WTC11 (cell line): ENCODE measurements at regions of chr11 and their contacts with region 1.

Region 1: DNA sequence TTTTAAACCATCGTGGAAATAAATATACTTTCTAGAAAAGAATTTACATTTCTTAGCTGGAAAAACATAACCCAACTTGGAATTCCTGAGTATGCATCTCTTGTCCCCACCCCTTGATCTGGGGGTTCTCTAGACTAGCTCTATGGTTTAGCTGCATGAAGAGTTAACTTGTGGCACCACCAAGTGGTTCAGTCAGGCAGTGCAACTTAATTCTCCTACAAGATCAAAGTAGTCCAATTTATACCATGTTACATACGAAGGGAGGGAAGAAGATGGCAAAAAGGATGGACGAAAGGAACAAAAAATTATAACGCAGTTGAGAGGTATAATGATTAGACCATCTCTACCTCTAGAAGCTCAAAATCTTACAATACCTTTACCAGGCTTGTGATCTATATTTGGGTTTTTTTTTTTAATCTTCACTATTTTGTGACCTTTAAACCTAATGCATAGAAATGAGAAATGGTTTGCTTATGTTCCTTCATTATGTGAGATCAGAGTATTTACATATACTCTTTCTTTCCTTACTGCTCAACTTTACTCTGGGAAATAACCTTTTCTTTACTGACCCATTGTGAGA is 28.5 kb upstream of the ALKBH3 start:
- DNase-seq: peak; percentile 77
- ATAC-seq: peak; percentile 97
- H3K4me3 Mint-ChIP-seq: no peak overlapping the region
- H3K27ac Mint-ChIP-seq: no peak overlapping the region
- H3K4me1 Mint-ChIP-seq: no peaks in the 10 kb centered on the region
- H3K27me3 Mint-ChIP-seq: no peaks in the 10 kb centered on the region
- CTCF ChIP-seq: peak; percentile 76

Region 2: DNA sequence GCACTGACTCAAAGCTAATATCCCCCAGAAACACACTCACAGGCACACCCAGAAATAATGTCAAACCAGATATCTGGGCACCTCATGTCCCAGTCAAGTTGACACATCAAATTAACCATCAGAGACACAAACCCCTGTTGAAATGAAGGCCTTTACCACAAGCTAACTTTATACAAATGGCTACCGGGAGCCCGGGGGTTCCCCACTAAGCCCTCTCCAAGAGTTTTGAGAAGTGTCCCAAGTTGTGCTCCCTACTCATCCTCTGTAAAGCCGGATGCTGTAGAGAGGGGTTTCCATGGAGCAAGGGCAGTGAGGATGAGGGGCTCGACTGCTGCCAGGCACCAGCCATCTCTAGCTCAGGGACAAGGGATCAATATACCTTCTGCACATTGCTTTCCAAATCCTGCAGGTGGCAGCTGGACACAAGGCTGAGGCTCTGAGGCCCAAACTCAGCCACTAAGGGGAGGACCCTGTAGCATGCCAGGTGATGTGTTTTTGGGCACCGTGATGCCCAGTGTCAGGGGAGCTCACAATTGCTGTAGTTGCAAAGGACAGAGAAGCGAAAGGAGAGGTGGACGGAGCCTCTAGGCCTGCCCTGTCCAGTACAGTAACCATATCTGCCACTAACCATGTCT is 347.7 kb before region 1 on chr11:
- CTCF ChIA-PET with region 1: interaction called, 20 read pairs
- POLR2A ChIA-PET with region 1: no interaction called
- DNase-seq: peak; percentile 44
- ATAC-seq: peak; percentile 91
- H3K4me3 Mint-ChIP-seq: no peak overlapping the region
- H3K27ac Mint-ChIP-seq: no peak overlapping the region
- H3K4me1 Mint-ChIP-seq: peaks cover 9% of the 10 kb centered on the region
- H3K27me3 Mint-ChIP-seq: peaks cover 10% of the 10 kb centered on the region
- CTCF ChIP-seq: no peak; the same call in 1 of the 2 replicates

Region 3: DNA sequence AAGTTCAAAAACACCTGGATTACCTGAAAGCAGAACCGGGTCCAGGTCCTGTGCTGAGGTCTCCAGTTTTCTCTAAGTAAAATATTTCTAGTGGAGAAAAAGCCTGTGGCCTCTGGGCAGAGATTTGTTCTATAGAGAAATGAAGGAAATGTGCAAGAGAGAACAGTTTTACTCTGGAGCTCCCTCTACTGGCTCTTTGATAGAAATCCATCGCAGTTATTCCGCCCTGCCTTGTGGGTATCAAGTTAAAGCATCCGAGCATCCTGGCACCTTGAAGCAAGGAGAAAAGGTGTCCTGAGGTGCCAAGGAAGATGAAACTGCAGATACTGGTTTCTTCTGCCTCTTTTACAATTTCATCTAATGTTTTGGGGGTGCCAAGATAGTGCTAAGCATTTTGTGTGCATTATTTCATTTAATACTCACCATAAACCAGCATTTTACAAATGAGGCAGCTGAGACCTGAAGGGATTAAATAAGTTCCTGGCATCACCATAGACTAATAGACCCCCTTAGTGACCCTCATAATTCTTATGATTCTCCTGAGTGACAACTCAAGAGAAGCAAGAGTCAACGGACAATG is 284.7 kb before region 1 on chr11:
- CTCF ChIA-PET with region 1: interaction called, 15 read pairs
- POLR2A ChIA-PET with region 1: no interaction called
- DNase-seq: no peak
- ATAC-seq: peak; percentile 88
- H3K4me3 Mint-ChIP-seq: no peak overlapping the region
- H3K27ac Mint-ChIP-seq: no peak overlapping the region
- H3K4me1 Mint-ChIP-seq: no peaks in the 10 kb centered on the region
- H3K27me3 Mint-ChIP-seq: peaks cover 57% of the 10 kb centered on the region
- CTCF ChIP-seq: peak; percentile 61; the same call in 1 of the 2 replicates

Region 4: GRCh38 chr11:43573233-43573632 is 278.9 kb before region 1 on chr11:
- CTCF ChIA-PET with region 1: interaction called, 35 read pairs
- POLR2A ChIA-PET with region 1: no interaction called
- DNase-seq: peak; percentile 64
- ATAC-seq: peak; percentile 53
- H3K4me3 Mint-ChIP-seq: no peak overlapping the region
- H3K27ac Mint-ChIP-seq: no peak overlapping the region
- H3K4me1 Mint-ChIP-seq: peaks cover 32% of the 10 kb centered on the region
- H3K27me3 Mint-ChIP-seq: peaks cover 100% of the 10 kb centered on the region
- CTCF ChIP-seq: peak; percentile 57; the same call in 1 of the 2 replicates

Region 5: GRCh38 chr11:43585877-43586608 is 266.1 kb before region 1 on chr11:
- CTCF ChIA-PET with region 1: interaction called, 11 read pairs
- POLR2A ChIA-PET with region 1: no interaction called
- DNase-seq: no peak
- ATAC-seq: no peak
- H3K4me3 Mint-ChIP-seq: no peak overlapping the region
- H3K27ac Mint-ChIP-seq: no peak overlapping the region
- H3K4me1 Mint-ChIP-seq: peaks cover 20% of the 10 kb centered on the region
- H3K27me3 Mint-ChIP-seq: peaks cover 74% of the 10 kb centered on the region
- CTCF ChIP-seq: no peak

Region 6: GRCh38 chr11:43751726-43752125 is 100.4 kb before region 1 on chr11:
- CTCF ChIA-PET with region 1: no interaction called
- POLR2A ChIA-PET with region 1: no interaction called
- DNase-seq: no peak
- ATAC-seq: no peak
- H3K4me3 Mint-ChIP-seq: no peak overlapping the region
- H3K27ac Mint-ChIP-seq: no peak overlapping the region
- H3K4me1 Mint-ChIP-seq: peaks cover 6% of the 10 kb centered on the region
- H3K27me3 Mint-ChIP-seq: no peaks in the 10 kb centered on the region
- CTCF ChIP-seq: no peak

Region 7: DNA sequence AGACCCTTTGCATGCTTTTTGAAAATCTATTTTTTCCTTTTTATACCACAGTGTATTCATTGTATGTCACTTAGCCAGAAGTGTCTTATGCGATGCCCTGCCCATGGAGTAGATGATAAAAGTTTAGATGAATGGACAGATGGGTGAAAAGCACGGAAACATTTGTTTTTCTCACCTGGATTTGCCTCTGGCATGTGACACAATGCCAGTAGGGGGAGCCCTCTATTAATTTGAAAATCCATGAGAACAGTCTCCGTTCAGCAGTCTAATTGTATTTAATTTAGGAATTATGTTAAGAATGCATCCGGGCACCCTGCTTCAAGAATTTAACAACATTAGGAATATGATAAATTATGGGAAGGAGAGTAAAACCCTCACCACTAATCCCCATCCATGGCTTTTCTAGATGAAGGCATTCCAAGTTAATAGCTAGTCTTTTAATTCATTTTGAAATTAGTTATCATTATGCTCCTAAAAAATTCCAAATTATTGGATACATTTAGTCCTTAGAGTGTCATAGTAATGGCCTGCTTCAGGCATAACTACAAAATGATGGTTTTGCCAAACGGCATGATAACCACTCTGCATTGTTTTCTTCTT is 26.8 kb before region 1 on chr11:
- CTCF ChIA-PET with region 1: interaction called, 18 read pairs
- POLR2A ChIA-PET with region 1: no interaction called
- DNase-seq: no peak
- ATAC-seq: peak; percentile 36; the same call in 1 of the 2 replicates
- H3K4me3 Mint-ChIP-seq: no peak overlapping the region
- H3K27ac Mint-ChIP-seq: no peak overlapping the region
- H3K4me1 Mint-ChIP-seq: 0 out of 2 replicates have a peak, but pooled peaks cover 4% of the 10 kb centered on the region
- H3K27me3 Mint-ChIP-seq: no peaks in the 10 kb centered on the region
- CTCF ChIP-seq: 0 out of 2 replicates have a peak, but pooled peaks have one; percentile 23

Region 8: GRCh38 chr11:43835104-43835503 is 17.0 kb before region 1 on chr11:
- CTCF ChIA-PET with region 1: interaction called, 11 read pairs
- POLR2A ChIA-PET with region 1: no interaction called
- DNase-seq: no peak
- ATAC-seq: no peak
- H3K4me3 Mint-ChIP-seq: no peak overlapping the region
- H3K27ac Mint-ChIP-seq: no peak overlapping the region
- H3K4me1 Mint-ChIP-seq: no peaks in the 10 kb centered on the region
- H3K27me3 Mint-ChIP-seq: no peaks in the 10 kb centered on the region
- CTCF ChIP-seq: no peak

Region 9: DNA sequence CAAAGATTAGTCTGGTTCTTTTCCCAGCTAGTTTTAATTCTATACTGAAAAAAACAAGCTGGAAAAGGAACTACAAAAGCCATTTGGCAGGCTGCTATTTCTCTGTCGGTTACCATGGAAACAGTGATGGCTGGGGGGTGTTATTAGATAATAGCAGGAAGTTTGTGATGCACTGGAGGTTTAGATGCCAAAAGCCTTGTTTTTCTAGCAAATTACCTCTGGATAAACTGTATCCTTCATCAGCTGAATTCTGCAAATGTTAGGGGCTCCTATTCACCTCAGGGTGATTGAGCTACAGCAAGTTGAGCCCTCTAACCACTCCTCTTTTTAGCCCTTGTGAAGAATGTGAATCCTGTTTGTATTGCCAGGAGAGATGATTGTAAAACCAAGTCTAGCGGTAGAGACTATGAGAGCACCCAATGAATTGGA is 53.7 kb after region 1 on chr11:
- CTCF ChIA-PET with region 1: no interaction called
- POLR2A ChIA-PET with region 1: no interaction called
- DNase-seq: no peak
- ATAC-seq: no peak
- H3K4me3 Mint-ChIP-seq: no peak overlapping the region
- H3K27ac Mint-ChIP-seq: no peak overlapping the region
- H3K4me1 Mint-ChIP-seq: no peaks in the 10 kb centered on the region
- H3K27me3 Mint-ChIP-seq: no peaks in the 10 kb centered on the region
- CTCF ChIP-seq: no peak

Region 10: GRCh38 chr11:43933608-43934551 is 81.7 kb after region 1 on chr11:
- CTCF ChIA-PET with region 1: no interaction called
- POLR2A ChIA-PET with region 1: no interaction called
- DNase-seq: no peak
- ATAC-seq: peak; percentile 15; the same call in 1 of the 2 replicates
- H3K4me3 Mint-ChIP-seq: no peak overlapping the region
- H3K27ac Mint-ChIP-seq: no peak overlapping the region
- H3K4me1 Mint-ChIP-seq: peaks cover 6% of the 10 kb centered on the region
- H3K27me3 Mint-ChIP-seq: peaks cover 4% of the 10 kb centered on the region; the same call in 1 of the 2 replicates
- CTCF ChIP-seq: no peak

Region 11: DNA sequence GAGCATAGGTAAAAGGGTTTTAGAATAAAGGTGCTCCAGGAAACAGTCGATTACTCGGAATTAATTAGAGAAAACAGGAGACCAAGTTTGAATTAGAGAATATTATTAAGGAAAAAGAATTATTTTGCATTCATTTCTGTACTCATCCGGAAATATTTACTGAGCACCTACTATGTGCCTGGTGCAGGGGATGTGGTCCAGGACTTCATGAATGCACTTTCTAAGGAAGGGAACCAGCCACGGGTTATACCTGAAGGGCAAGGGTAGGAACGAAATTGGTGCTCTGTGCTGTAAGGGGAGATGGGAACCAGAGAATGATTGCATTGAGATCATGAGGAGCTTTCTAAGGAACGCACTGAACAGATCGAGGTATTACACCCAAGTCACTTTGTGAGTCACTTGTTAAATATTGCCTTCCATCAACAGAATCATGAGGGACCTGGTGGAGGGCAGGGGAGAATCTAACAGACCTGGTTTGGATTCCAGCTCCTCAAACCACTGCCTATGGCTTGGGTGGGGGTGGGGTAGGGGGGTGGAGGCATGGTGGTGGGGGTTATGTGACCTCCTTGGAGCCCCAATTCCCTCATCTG is 131.2 kb after region 1 on chr11:
- CTCF ChIA-PET with region 1: no interaction called
- POLR2A ChIA-PET with region 1: no interaction called
- DNase-seq: no peak
- ATAC-seq: no peak
- H3K4me3 Mint-ChIP-seq: no peak overlapping the region
- H3K27ac Mint-ChIP-seq: no peak overlapping the region
- H3K4me1 Mint-ChIP-seq: peaks cover 21% of the 10 kb centered on the region
- H3K27me3 Mint-ChIP-seq: no peaks in the 10 kb centered on the region
- CTCF ChIP-seq: no peak